ENCODE measurements at regions of chr1 and their contacts with region 1.

Region 1: GRCh38 chr1:105964879-105965278 is 1091.6 kb upstream of the PRMT6 start:
- DNase-seq: no peak
- ATAC-seq: no peak
- H3K4me3 ChIP-seq: no peak overlapping the region
- H3K27ac ChIP-seq: no peak overlapping the region
- H3K4me1 ChIP-seq: no peaks in the 10 kb centered on the region
- H3K27me3 ChIP-seq: no peaks in the 10 kb centered on the region
- CTCF ChIP-seq: no peak

Region 2: DNA sequence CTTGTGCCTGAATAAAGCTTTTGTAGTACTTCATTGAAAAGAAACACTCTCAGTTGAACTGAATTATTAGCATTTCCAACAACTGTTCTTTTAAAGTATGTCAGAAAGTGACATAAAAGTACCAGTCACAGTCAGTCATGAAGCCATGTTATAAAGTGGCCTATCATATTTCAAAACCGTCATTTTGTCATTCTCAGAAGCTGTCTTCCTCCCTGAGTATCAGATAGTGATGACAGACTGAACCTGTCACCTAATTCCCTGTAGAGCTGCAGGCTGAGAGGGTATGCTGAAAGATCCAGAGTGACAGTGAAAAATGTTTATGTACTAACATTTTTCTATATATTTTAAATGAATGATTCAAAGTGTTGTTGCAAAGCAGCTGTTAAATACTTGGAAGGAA is 30.1 kb before region 1 on chr1:
- CTCF ChIA-PET with region 1: no interaction called
- POLR2A ChIA-PET with region 1: no interaction called
- intact Hi-C with region 1: no loop called
- DNase-seq: no peak
- ATAC-seq: no peak
- H3K4me3 ChIP-seq: no peak overlapping the region
- H3K27ac ChIP-seq: no peak overlapping the region
- H3K4me1 ChIP-seq: no peaks in the 10 kb centered on the region
- H3K27me3 ChIP-seq: no peaks in the 10 kb centered on the region
- CTCF ChIP-seq: no peak

Region 3: GRCh38 chr1:105997516-105997915 is 32.6 kb after region 1 on chr1:
- CTCF ChIA-PET with region 1: no interaction called
- POLR2A ChIA-PET with region 1: no interaction called
- intact Hi-C with region 1: loop called (anchors 2 kb)
- DNase-seq: peak; percentile 65
- ATAC-seq: peak; percentile 84
- H3K4me3 ChIP-seq: no peak overlapping the region
- H3K27ac ChIP-seq: peak overlapping the region; percentile 83
- H3K4me1 ChIP-seq: peaks cover 14% of the 10 kb centered on the region
- H3K27me3 ChIP-seq: no peaks in the 10 kb centered on the region
- CTCF ChIP-seq: no peak

Measured in PC-3 (cell line).